Activated naive CD4-positive, alpha-beta T cell treated with anti-CD3 and anti-CD28 coated beads for 36 hours (primary cell): ENCODE measurements at regions of chr17 and their contacts with region 1.

Region 1: DNA sequence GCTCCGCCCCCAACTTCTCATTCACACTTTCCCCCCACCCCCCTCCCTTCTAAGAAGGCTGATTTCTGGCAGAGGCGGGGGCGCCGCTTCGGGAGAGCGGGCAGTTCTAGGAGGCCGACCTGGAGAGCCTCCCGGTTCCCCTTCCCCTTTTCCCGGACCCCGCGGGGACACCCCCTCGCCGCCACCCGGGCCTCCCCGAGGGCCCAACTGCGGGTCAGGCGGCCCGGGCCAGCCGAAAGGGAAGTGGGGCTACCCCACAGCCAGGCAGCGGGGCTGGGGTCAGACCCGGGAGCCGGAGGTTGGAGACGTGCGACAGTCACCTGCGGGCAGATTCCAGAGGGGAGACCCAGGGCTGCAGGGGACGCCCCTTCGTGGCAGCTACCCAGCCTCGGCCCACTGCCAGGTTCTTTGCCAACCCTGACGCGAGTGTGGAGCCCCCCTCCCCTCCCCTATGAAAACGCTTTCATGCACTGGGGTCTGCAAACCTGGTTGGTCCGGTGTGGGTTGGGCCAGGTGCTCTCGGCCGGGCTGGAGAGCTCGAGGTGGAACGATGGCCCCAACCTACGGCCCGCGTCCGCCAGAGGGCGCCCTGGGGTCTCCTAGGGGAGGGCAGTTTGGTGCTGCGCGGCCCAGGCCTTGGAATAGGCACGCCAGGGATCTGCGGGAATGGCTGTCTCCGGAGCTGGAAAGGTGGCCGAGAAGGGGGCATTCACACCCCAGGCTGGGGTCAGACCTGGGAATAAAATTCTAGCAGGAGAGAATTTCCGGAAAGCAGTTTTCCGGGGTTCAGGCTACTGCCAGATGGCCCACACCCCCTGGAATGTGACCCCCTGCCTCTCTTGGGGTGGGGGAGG is 721 bp upstream of the SOCS3 start:
- DNase-seq: peak; percentile 97
- H3K4me3 Mint-ChIP-seq: peak overlapping the region; percentile 73
- H3K27ac Mint-ChIP-seq: peak overlapping the region; percentile 89
- H3K4me1 Mint-ChIP-seq: peaks cover 37% of the 10 kb centered on the region
- H3K27me3 Mint-ChIP-seq: peaks cover 5% of the 10 kb centered on the region

Region 2: DNA sequence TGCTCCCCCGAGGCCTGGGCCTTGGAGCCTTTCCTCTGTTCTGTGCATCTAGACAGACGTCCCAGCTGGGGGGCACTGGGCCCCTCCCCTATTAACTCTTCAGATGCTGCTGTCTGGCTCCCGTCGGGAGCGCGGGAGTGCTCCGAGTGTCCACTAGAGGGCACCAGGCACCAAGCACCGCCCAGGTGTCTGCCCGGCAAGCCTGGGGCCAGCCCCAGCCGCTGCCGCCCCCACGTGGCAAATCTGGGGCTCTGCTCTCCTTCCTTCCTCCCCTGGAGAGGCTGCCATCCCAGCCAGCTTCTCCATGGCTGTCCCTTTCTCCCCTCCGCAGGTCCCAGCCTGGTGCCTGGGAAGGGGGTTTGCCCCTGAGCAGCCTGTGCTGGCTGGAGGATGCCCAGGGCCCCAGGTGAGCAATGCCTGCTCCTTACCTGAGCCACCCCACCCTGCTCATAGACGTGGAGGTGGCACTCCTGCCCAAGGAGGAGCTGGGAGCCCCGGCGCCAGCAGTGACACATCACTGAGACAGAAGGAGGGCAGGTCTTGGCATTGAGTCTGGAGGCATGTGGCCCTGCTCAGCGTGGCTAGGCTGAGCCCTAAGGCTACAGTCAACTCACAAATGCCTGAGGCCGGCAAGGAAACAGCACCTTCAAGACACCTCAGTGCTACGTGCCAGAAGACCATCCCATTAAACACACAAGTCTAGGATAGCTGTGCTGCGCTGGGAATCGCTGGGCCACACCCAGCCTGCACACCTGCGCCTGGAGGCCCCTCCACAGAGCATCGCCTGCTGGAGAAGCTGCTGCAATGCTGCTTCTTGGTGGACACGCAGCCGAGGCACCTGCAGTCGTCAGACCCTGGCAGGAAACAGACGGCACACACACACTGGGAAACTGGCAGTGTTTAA is 109.5 kb before region 1 on chr17:
- CTCF ChIA-PET with region 1: interaction called, 13 read pairs
- intact Hi-C with region 1: loop called (anchors 1 kb)
- DNase-seq: peak; percentile 93
- H3K4me3 Mint-ChIP-seq: peak overlapping the region; percentile 75
- H3K27ac Mint-ChIP-seq: peak overlapping the region; percentile 67
- H3K4me1 Mint-ChIP-seq: peaks cover 35% of the 10 kb centered on the region
- H3K27me3 Mint-ChIP-seq: no peaks in the 10 kb centered on the region

Region 3: GRCh38 chr17:78289802-78290363 is 70.7 kb before region 1 on chr17:
- CTCF ChIA-PET with region 1: interaction called, 36 read pairs
- intact Hi-C with region 1: loop called (anchors 1 kb)
- DNase-seq: peak; percentile 89
- H3K4me3 Mint-ChIP-seq: no peak overlapping the region
- H3K27ac Mint-ChIP-seq: no peak overlapping the region
- H3K4me1 Mint-ChIP-seq: peaks cover 2% of the 10 kb centered on the region
- H3K27me3 Mint-ChIP-seq: no peaks in the 10 kb centered on the region

Region 4: GRCh38 chr17:78343187-78343542 is 17.4 kb before region 1 on chr17:
- CTCF ChIA-PET with region 1: interaction called, 9 read pairs
- intact Hi-C with region 1: loop called (anchors 1 kb)
- DNase-seq: peak; percentile 59
- H3K4me3 Mint-ChIP-seq: peak overlapping the region; percentile 69
- H3K27ac Mint-ChIP-seq: peak overlapping the region; percentile 91
- H3K4me1 Mint-ChIP-seq: peaks cover 71% of the 10 kb centered on the region
- H3K27me3 Mint-ChIP-seq: no peaks in the 10 kb centered on the region

Region 5: DNA sequence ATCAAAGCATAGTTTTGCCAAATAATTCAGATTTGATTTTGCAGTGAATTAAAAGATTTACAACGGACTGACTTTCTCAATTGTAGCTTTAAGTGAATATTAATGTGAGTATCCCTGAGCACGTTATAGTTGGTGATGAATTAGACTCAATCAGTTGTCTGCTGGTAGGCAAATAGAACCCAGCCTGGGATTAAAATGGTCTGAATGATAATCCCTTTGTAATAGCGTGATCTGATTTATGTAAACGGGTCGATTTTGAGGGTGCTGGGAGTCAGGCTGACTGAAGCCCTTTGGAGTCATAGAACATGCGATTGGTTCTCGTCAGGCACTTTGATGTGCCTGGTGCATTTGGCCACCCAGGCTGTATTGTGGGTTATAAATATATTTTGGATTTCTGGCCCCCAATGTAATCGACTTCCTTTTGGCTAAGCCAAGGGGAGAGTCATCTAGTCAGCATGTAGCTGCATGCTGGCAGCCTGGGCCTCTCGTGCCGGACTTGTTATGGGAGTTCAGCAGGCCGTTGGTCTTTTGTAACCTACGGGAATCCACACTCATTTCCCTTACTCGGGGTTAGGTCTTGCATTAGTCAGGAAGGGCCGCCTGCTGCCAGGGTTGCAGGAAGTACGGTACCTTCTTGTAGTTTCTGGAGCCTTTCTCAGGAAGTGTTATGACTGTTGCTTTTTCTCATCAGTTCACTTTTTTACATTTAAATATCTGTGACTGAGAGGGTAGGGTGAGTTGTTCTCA is 23.3 kb after region 1 on chr17:
- CTCF ChIA-PET with region 1: interaction called, 35 read pairs
- intact Hi-C with region 1: no loop called
- DNase-seq: peak; percentile 88
- H3K4me3 Mint-ChIP-seq: peak overlapping the region; percentile 70
- H3K27ac Mint-ChIP-seq: peak overlapping the region; percentile 99
- H3K4me1 Mint-ChIP-seq: peaks cover 96% of the 10 kb centered on the region
- H3K27me3 Mint-ChIP-seq: no peaks in the 10 kb centered on the region

Region 6: GRCh38 chr17:78598013-78598471 is 237.4 kb after region 1 on chr17:
- CTCF ChIA-PET with region 1: no interaction called
- intact Hi-C with region 1: loop called (anchors 10 kb)
- DNase-seq: no peak
- H3K4me3 Mint-ChIP-seq: no peak overlapping the region
- H3K27ac Mint-ChIP-seq: no peak overlapping the region
- H3K4me1 Mint-ChIP-seq: no peaks in the 10 kb centered on the region
- H3K27me3 Mint-ChIP-seq: no peaks in the 10 kb centered on the region

Region 7: DNA sequence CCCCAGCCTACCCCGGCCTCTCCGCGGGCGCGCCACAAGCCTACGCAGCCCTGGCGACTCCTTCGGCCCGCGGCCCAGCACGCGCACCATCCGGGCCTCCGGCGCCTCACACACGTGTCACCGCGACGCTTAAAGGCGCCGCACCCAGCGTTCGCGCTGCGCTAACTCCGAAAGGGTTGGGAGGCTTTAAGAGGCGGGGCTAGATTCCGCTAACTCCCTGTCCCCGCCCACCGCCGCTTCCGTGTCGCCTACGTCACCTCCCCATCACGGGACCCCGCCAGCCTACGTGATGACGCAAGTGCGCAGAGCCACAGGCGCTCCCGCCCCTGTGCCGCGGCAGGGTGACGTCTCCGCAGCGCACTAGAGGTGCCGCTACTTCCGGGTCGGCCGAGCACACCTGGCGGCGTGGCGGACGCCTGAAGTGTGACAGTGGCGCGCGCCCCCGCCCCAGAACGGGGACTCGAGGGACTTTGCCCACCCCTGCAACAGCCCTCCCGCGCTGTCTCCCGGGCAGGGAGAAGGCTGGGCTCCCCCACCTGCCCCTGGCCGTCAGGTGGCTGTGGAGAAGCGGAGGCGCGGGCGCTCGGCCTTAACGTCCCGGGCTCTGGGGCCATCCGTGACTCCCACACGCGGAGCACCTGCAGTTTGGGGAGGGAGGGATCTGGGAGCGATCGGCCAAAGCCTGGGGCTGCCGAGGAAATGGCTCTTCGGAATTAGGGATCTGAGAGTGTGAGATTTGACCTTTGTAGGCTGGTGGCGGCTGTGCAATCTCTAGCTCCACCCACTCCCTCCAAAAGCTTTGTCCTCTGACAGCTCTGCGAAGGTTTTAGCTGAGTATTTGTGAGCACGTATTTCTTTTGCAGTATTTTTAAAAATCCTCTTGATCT is 480.4 kb after region 1 on chr17 and contains the start of gene USP36:
- CTCF ChIA-PET with region 1: no interaction called
- intact Hi-C with region 1: loop called (anchors 1 kb)
- DNase-seq: peak; percentile 100
- H3K4me3 Mint-ChIP-seq: peak within 1 kb of the TSS; percentile 96
- H3K27ac Mint-ChIP-seq: peak within 1 kb of the TSS; percentile 93
- H3K4me1 Mint-ChIP-seq: peaks cover 44% of the 10 kb centered on the region
- H3K27me3 Mint-ChIP-seq: no peaks in the 10 kb centered on the region
- total RNA-seq, gene USP36: 65.3 to 68.7 TPM